ENCODE measurements at regions of chr19 and their contacts with region 1.

Region 1: GRCh38 chr19:40335855-40336600 is 12.2 kb downstream of the C19orf47 start:
- DNase-seq: no peak
- H3K4me3 ChIP-seq: no peak overlapping the region
- H3K27ac ChIP-seq: no peak overlapping the region
- H3K4me1 ChIP-seq: no peaks in the 10 kb centered on the region
- H3K27me3 ChIP-seq: no peaks in the 10 kb centered on the region
- CTCF ChIP-seq: no peak
- POLR2A ChIP-seq: no peak

Region 2: GRCh38 chr19:40294560-40294959 is 41.5 kb before region 1 on chr19:
- CTCF ChIA-PET with region 1: interaction called, 3 read pairs
- POLR2A ChIA-PET with region 1: no interaction called
- dilution Hi-C with region 1: no loop called
- intact Hi-C with region 1: loop called (anchors 5 kb)
- DNase-seq: no peak
- H3K4me3 ChIP-seq: no peak overlapping the region
- H3K27ac ChIP-seq: no peak overlapping the region
- H3K4me1 ChIP-seq: no peaks in the 10 kb centered on the region
- H3K27me3 ChIP-seq: no peaks in the 10 kb centered on the region
- CTCF ChIP-seq: no peak
- POLR2A ChIP-seq: no peak

Region 3: DNA sequence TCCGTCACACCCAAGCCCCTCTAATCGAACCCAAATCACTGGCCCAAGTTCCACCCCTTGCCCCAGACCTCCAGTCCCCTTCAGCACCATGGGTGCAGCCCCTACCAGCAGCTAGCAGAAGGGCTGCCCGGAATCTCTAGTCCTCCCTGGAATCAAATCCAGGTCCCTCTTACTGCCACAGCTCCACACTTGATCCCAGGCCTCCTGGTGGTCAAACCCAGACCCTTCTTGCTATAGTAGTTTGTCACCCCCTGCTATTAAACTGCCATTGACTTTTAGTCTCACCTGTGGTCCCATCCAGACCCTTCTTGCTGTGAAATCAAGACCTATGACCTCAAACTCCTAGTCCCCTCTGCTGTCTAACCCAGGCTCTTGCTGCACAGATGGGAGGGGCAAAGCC is 45.3 kb after region 1 on chr19:
- CTCF ChIA-PET with region 1: no interaction called
- POLR2A ChIA-PET with region 1: no interaction called
- dilution Hi-C with region 1: no loop called
- intact Hi-C with region 1: no loop called
- DNase-seq: no peak
- H3K4me3 ChIP-seq: no peak overlapping the region
- H3K27ac ChIP-seq: no peak overlapping the region
- H3K4me1 ChIP-seq: no peaks in the 10 kb centered on the region
- H3K27me3 ChIP-seq: no peaks in the 10 kb centered on the region
- CTCF ChIP-seq: peak in 1 of 2 donors; percentile 22
- POLR2A ChIP-seq: no peak

Region 4: GRCh38 chr19:40553885-40554857 is 218.1 kb after region 1 on chr19:
- CTCF ChIA-PET with region 1: no interaction called
- POLR2A ChIA-PET with region 1: interaction called, 11 read pairs
- dilution Hi-C with region 1: no loop called
- intact Hi-C with region 1: no loop called
- DNase-seq: no peak
- H3K4me3 ChIP-seq: no peak overlapping the region
- H3K27ac ChIP-seq: no peak overlapping the region
- H3K4me1 ChIP-seq: no peaks in the 10 kb centered on the region
- H3K27me3 ChIP-seq: peaks cover 19 to 24% of the 10 kb centered on the region in 2 experiments
- CTCF ChIP-seq: no peak
- POLR2A ChIP-seq: no peak